ENCODE measurements at regions of chr2 and their contacts with region 1.

Region 1: GRCh38 chr2:146147448-146148012 is 1627.6 kb upstream of the ZEB2 start:
- DNase-seq: no peak
- H3K4me3 ChIP-seq: no peak overlapping the region
- H3K27ac ChIP-seq: no peak overlapping the region
- H3K4me1 ChIP-seq: no peaks in the 10 kb centered on the region
- H3K27me3 ChIP-seq: no peaks in the 10 kb centered on the region
- CTCF ChIP-seq: no peak
- POLR2A ChIP-seq: no peak

Region 2: GRCh38 chr2:146220957-146221356 is 73.4 kb after region 1 on chr2:
- CTCF ChIA-PET with region 1: no interaction called
- POLR2A ChIA-PET with region 1: no interaction called
- dilution Hi-C with region 1: no loop called
- intact Hi-C with region 1: no loop called
- DNase-seq: no peak
- H3K4me3 ChIP-seq: no peak overlapping the region
- H3K27ac ChIP-seq: no peak overlapping the region
- H3K4me1 ChIP-seq: no peaks in the 10 kb centered on the region
- H3K27me3 ChIP-seq: no peaks in the 10 kb centered on the region
- CTCF ChIP-seq: no peak
- POLR2A ChIP-seq: no peak

Region 3: DNA sequence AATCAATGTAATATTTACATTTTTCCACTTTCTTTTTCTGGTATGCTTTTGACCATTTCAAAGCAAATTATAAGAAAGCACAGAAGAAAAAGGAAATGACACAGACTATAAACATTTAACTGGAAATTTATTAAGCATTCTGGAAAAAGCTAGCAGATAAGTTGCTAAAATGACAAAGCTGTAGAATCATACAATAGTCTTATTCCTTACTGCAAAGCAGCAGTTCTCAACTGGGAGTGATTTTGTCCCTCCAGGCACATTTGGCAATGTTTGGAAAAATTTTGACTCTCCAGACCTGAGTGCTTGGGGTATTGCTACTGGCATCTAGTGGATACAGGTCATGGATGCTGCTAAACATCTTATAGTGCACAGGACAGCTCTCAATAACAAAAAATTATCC is 1948.5 kb after region 1 on chr2:
- CTCF ChIA-PET with region 1: no interaction called
- POLR2A ChIA-PET with region 1: no interaction called
- dilution Hi-C with region 1: no loop called
- intact Hi-C with region 1: loop called (anchors 10 kb)
- DNase-seq: peak; percentile 33
- H3K4me3 ChIP-seq: no peak overlapping the region
- H3K27ac ChIP-seq: no peak overlapping the region
- H3K4me1 ChIP-seq: peaks cover 9% of the 10 kb centered on the region
- H3K27me3 ChIP-seq: no peaks in the 10 kb centered on the region
- CTCF ChIP-seq: no peak
- POLR2A ChIP-seq: no peak